PC-3 (cell line): ENCODE measurements at regions of chr4 and their contacts with region 1.

Region 1: DNA sequence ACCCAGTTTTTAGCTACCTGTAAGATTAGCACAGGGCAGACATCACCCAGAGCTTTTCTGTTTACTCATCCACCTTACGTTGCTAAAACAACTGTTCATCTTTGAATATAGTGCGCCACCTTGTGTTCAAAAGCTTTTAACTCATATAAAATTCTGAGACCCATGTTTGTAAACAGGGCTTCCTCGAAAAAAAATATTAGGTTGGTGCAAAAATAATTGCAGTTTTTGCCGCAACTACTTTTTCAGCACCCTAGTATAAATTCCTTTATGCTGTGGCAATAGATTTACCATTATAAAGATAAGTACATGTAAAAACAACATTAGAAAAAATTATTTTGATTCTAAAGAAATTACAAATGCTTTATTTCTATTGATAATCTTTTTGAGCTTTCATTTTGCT is 147.9 kb downstream of the LRBA start:
- DNase-seq: peak; percentile 88
- ATAC-seq: peak; percentile 57
- H3K4me3 ChIP-seq: no peak overlapping the region
- H3K27ac ChIP-seq: no peak overlapping the region
- H3K4me1 ChIP-seq: no peaks in the 10 kb centered on the region
- H3K27me3 ChIP-seq: no peaks in the 10 kb centered on the region
- CTCF ChIP-seq: peak; percentile 66

Region 2: GRCh38 chr4:149999485-150000074 is 867.6 kb before region 1 on chr4:
- CTCF ChIA-PET with region 1: no interaction called
- POLR2A ChIA-PET with region 1: no interaction called
- intact Hi-C with region 1: loop called (anchors 5 kb)
- DNase-seq: peak; percentile 60
- ATAC-seq: no peak
- H3K4me3 ChIP-seq: no peak overlapping the region
- H3K27ac ChIP-seq: no peak overlapping the region
- H3K4me1 ChIP-seq: peaks cover 19% of the 10 kb centered on the region
- H3K27me3 ChIP-seq: no peaks in the 10 kb centered on the region
- CTCF ChIP-seq: peak; percentile 75

Region 3: DNA sequence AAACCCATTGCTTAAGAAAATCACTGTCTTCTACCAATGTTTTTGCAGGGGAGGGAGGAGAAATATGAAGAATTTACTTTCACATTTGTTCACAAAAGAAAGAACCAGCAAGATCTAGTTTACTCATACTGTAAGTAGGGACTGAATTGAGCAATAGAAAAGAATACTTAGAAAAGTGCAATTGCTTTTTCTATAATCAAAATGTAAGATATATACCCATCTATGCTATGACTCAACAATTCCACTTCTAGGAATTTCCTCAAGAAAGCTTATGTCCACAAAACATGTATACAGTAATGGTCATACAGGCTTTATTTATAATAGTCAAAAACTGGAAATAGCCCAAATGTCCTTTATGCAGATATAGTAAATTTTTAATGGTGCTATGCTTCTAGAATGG is 48.5 kb before region 1 on chr4:
- CTCF ChIA-PET with region 1: interaction called, 3 read pairs
- POLR2A ChIA-PET with region 1: no interaction called
- intact Hi-C with region 1: loop called (anchors 10 kb)
- DNase-seq: peak; percentile 53
- ATAC-seq: peak; percentile 73
- H3K4me3 ChIP-seq: no peak overlapping the region
- H3K27ac ChIP-seq: no peak overlapping the region
- H3K4me1 ChIP-seq: no peaks in the 10 kb centered on the region; the same call in 1 of the 2 replicates
- H3K27me3 ChIP-seq: no peaks in the 10 kb centered on the region
- CTCF ChIP-seq: no peak

Region 4: DNA sequence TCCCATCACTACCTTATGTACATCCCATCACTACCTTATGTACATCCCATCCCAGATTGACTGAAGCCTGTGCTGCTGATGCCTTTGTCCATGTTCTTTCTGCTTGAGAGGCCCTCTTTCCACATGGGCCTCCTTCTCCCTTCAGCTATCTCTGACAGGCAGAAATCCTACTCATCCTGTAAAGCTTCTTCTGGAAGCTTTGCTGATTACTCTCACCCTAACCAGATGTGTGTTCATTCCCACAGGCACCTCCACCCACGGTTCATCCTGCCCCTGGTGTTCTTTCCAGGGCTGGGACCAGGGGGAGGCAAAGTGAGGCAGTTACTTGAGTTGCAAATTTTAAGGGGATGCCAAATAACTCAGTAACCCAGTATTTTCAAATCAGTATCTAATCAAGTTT is 1691.2 kb after region 1 on chr4:
- CTCF ChIA-PET with region 1: no interaction called
- POLR2A ChIA-PET with region 1: interaction called, 11 read pairs
- intact Hi-C with region 1: no loop called
- DNase-seq: no peak
- ATAC-seq: no peak
- H3K4me3 ChIP-seq: no peak overlapping the region
- H3K27ac ChIP-seq: no peak overlapping the region
- H3K4me1 ChIP-seq: no peaks in the 10 kb centered on the region
- H3K27me3 ChIP-seq: no peaks in the 10 kb centered on the region
- CTCF ChIP-seq: no peak